K562 (cell line): ENCODE measurements at regions of chr12 and their contacts with region 1.

Region 1: GRCh38 chr12:122078141-122079032 is at the start of gene MLXIP:
- DNase-seq: peak; percentile 94 to 97 (median 95)
- ATAC-seq: peak; percentile 81
- H3K4me3 ChIP-seq: peak within 1 kb of the TSS; percentile 74
- H3K27ac ChIP-seq: peak within 1 kb of the TSS; percentile 88
- H3K4me1 ChIP-seq: peaks cover 27 to 29% of the 10 kb centered on the region in 2 experiments; a peak in 4 of 5 replicates
- H3K27me3 ChIP-seq: no peaks in the 10 kb centered on the region
- CTCF ChIP-seq: no peak
- EP300 ChIP-seq: no peak
- POLR2A ChIP-seq: peak; percentile 63
- RAD21 ChIP-seq: peak in 1 of 2 experiments; percentile 6; a peak in 1 of 4 replicates
- polyA plus RNA-seq, gene MLXIP: 2.2 to 3.8 TPM

Region 2: GRCh38 chr12:122064025-122064777 is 14.2 kb before region 1 on chr12:
- CTCF ChIA-PET with region 1: no interaction called
- POLR2A ChIA-PET with region 1: interaction called, 19 read pairs
- in situ Hi-C with region 1: no loop called
- intact Hi-C with region 1: loop called (anchors 1 kb)
- DNase-seq: peak; percentile 96 to 99 (median 98)
- ATAC-seq: peak; percentile 97
- H3K4me3 ChIP-seq: peak overlapping the region; percentile 44
- H3K27ac ChIP-seq: peak overlapping the region; percentile 94
- H3K4me1 ChIP-seq: peaks cover 45 to 54% of the 10 kb centered on the region in 2 experiments
- H3K27me3 ChIP-seq: no peaks in the 10 kb centered on the region
- CTCF ChIP-seq: peak; percentile 71 to 88 (median 82)
- EP300 ChIP-seq: peak; percentile 50
- POLR2A ChIP-seq: peak; percentile 81
- RAD21 ChIP-seq: peak; percentile 44 to 62

Region 3: GRCh38 chr12:122090759-122091515 is 12.6 kb after region 1 on chr12:
- CTCF ChIA-PET with region 1: no interaction called
- POLR2A ChIA-PET with region 1: interaction called, 68 read pairs
- in situ Hi-C with region 1: no loop called
- intact Hi-C with region 1: no loop called
- DNase-seq: no peak
- ATAC-seq: no peak
- H3K4me3 ChIP-seq: no peak overlapping the region
- H3K27ac ChIP-seq: peak overlapping the region; percentile 28; the same call in 1 of the 3 replicates
- H3K4me1 ChIP-seq: peaks cover 47 to 78% of the 10 kb centered on the region in 2 experiments; a peak in 4 of 5 replicates
- H3K27me3 ChIP-seq: no peaks in the 10 kb centered on the region
- CTCF ChIP-seq: no peak
- EP300 ChIP-seq: no peak
- POLR2A ChIP-seq: no peak
- RAD21 ChIP-seq: no peak

Region 4: GRCh38 chr12:122097927-122098756 is 19.8 kb after region 1 on chr12:
- CTCF ChIA-PET with region 1: no interaction called
- POLR2A ChIA-PET with region 1: interaction called, 53 read pairs
- in situ Hi-C with region 1: no loop called
- intact Hi-C with region 1: loop called (anchors 2 kb)
- DNase-seq: peak; percentile 86 to 96 (median 89)
- ATAC-seq: peak; percentile 91
- H3K4me3 ChIP-seq: no peak overlapping the region; the same call in 1 of the 2 replicates
- H3K27ac ChIP-seq: peak overlapping the region; percentile 74
- H3K4me1 ChIP-seq: peaks cover 54 to 66% of the 10 kb centered on the region in 2 experiments
- H3K27me3 ChIP-seq: no peaks in the 10 kb centered on the region
- CTCF ChIP-seq: peak in 1 of 3 experiments; percentile 1; a peak in 1 of 6 replicates
- EP300 ChIP-seq: peak; percentile 97
- POLR2A ChIP-seq: no peak
- RAD21 ChIP-seq: no peak